ENCODE measurements at regions of chr16 and their contacts with region 1.

Region 1: GRCh38 chr16:85305996-85306792 is 193.9 kb upstream of the CIBAR2 start:
- DNase-seq: peak; percentile 54 to 89 (median 82)
- ATAC-seq: peak; percentile 87
- H3K4me3 ChIP-seq: no peak overlapping the region
- H3K4me3 Mint-ChIP-seq: peak overlapping the region; percentile 44
- H3K27ac ChIP-seq: peak overlapping the region in 1 of 2 experiments; percentile 31
- H3K27ac Mint-ChIP-seq: peak overlapping the region; percentile 95
- H3K4me1 ChIP-seq: peaks cover 80% of the 10 kb centered on the region
- H3K4me1 Mint-ChIP-seq: peaks cover 58% of the 10 kb centered on the region
- H3K27me3 ChIP-seq: peaks cover 0 to 6% of the 10 kb centered on the region in 2 experiments
- H3K27me3 Mint-ChIP-seq: no peaks in the 10 kb centered on the region
- CTCF ChIP-seq: no peak

Region 2: GRCh38 chr16:85330694-85331188 is 24.5 kb after region 1 on chr16:
- CTCF ChIA-PET with region 1: interaction called, 103 read pairs
- POLR2A ChIA-PET with region 1: interaction called, 5 read pairs
- intact Hi-C with region 1: loop called (anchors 1 to 2 kb)
- DNase-seq: peak in 4 of 9 experiments; percentile 23 to 67 (median 35)
- ATAC-seq: peak; percentile 59
- H3K4me3 ChIP-seq: no peak overlapping the region
- H3K4me3 Mint-ChIP-seq: no peak overlapping the region
- H3K27ac ChIP-seq: no peak overlapping the region
- H3K27ac Mint-ChIP-seq: no peak overlapping the region
- H3K4me1 ChIP-seq: peaks cover 22% of the 10 kb centered on the region
- H3K4me1 Mint-ChIP-seq: peaks cover 19% of the 10 kb centered on the region
- H3K27me3 ChIP-seq: no peaks in the 10 kb centered on the region
- H3K27me3 Mint-ChIP-seq: peaks cover 8% of the 10 kb centered on the region
- CTCF ChIP-seq: peak; percentile 29

Region 3: GRCh38 chr16:85354686-85355514 is 48.7 kb after region 1 on chr16:
- CTCF ChIA-PET with region 1: no interaction called
- POLR2A ChIA-PET with region 1: no interaction called
- intact Hi-C with region 1: no loop called
- DNase-seq: no peak
- ATAC-seq: no peak
- H3K4me3 ChIP-seq: no peak overlapping the region
- H3K4me3 Mint-ChIP-seq: no peak overlapping the region
- H3K27ac ChIP-seq: no peak overlapping the region
- H3K27ac Mint-ChIP-seq: no peak overlapping the region
- H3K4me1 ChIP-seq: no peaks in the 10 kb centered on the region
- H3K4me1 Mint-ChIP-seq: no peaks in the 10 kb centered on the region
- H3K27me3 ChIP-seq: no peaks in the 10 kb centered on the region
- H3K27me3 Mint-ChIP-seq: no peaks in the 10 kb centered on the region
- CTCF ChIP-seq: no peak

Region 4: GRCh38 chr16:85393674-85394483 is 87.7 kb after region 1 on chr16:
- CTCF ChIA-PET with region 1: interaction called, 3 read pairs
- POLR2A ChIA-PET with region 1: no interaction called
- intact Hi-C with region 1: loop called in 1 of 2 experiments (anchors 1 kb)
- DNase-seq: peak; percentile 45 to 83 (median 69)
- ATAC-seq: peak; percentile 84
- H3K4me3 ChIP-seq: no peak overlapping the region
- H3K4me3 Mint-ChIP-seq: no peak overlapping the region
- H3K27ac ChIP-seq: no peak overlapping the region
- H3K27ac Mint-ChIP-seq: no peak overlapping the region
- H3K4me1 ChIP-seq: no peaks in the 10 kb centered on the region
- H3K4me1 Mint-ChIP-seq: no peaks in the 10 kb centered on the region
- H3K27me3 ChIP-seq: no peaks in the 10 kb centered on the region
- H3K27me3 Mint-ChIP-seq: peaks cover 3% of the 10 kb centered on the region
- CTCF ChIP-seq: peak; percentile 72

Region 5: GRCh38 chr16:85420501-85421337 is 114.5 kb after region 1 on chr16:
- CTCF ChIA-PET with region 1: interaction called, 6 read pairs
- POLR2A ChIA-PET with region 1: no interaction called
- intact Hi-C with region 1: loop called (anchors 5 to 10 kb)
- DNase-seq: peak; percentile 60 to 87 (median 72)
- ATAC-seq: peak; percentile 91
- H3K4me3 ChIP-seq: no peak overlapping the region
- H3K4me3 Mint-ChIP-seq: no peak overlapping the region
- H3K27ac ChIP-seq: no peak overlapping the region
- H3K27ac Mint-ChIP-seq: no peak overlapping the region
- H3K4me1 ChIP-seq: peaks cover 7% of the 10 kb centered on the region
- H3K4me1 Mint-ChIP-seq: peaks cover 2% of the 10 kb centered on the region
- H3K27me3 ChIP-seq: no peaks in the 10 kb centered on the region
- H3K27me3 Mint-ChIP-seq: peaks cover 2% of the 10 kb centered on the region
- CTCF ChIP-seq: peak; percentile 100

Region 6: GRCh38 chr16:85428168-85428898 is 122.1 kb after region 1 on chr16:
- CTCF ChIA-PET with region 1: no interaction called
- POLR2A ChIA-PET with region 1: no interaction called
- intact Hi-C with region 1: loop called (anchors 5 to 10 kb)
- DNase-seq: peak in 8 of 9 experiments; percentile 29 to 66 (median 53)
- ATAC-seq: peak; percentile 83
- H3K4me3 ChIP-seq: no peak overlapping the region
- H3K4me3 Mint-ChIP-seq: no peak overlapping the region
- H3K27ac ChIP-seq: no peak overlapping the region
- H3K27ac Mint-ChIP-seq: no peak overlapping the region
- H3K4me1 ChIP-seq: no peaks in the 10 kb centered on the region
- H3K4me1 Mint-ChIP-seq: no peaks in the 10 kb centered on the region
- H3K27me3 ChIP-seq: no peaks in the 10 kb centered on the region
- H3K27me3 Mint-ChIP-seq: peaks cover 2% of the 10 kb centered on the region
- CTCF ChIP-seq: peak; percentile 40

Region 7: GRCh38 chr16:85699628-85700027 is 393.4 kb after region 1 on chr16:
- CTCF ChIA-PET with region 1: no interaction called
- POLR2A ChIA-PET with region 1: no interaction called
- intact Hi-C with region 1: no loop called
- DNase-seq: no peak
- ATAC-seq: no peak
- H3K4me3 ChIP-seq: no peak overlapping the region
- H3K4me3 Mint-ChIP-seq: no peak overlapping the region
- H3K27ac ChIP-seq: no peak overlapping the region
- H3K27ac Mint-ChIP-seq: no peak overlapping the region
- H3K4me1 ChIP-seq: no peaks in the 10 kb centered on the region
- H3K4me1 Mint-ChIP-seq: no peaks in the 10 kb centered on the region
- H3K27me3 ChIP-seq: peaks cover 0 to under 1% of the 10 kb centered on the region in 2 experiments
- H3K27me3 Mint-ChIP-seq: peaks cover 8% of the 10 kb centered on the region
- CTCF ChIP-seq: no peak

Region 8: DNA sequence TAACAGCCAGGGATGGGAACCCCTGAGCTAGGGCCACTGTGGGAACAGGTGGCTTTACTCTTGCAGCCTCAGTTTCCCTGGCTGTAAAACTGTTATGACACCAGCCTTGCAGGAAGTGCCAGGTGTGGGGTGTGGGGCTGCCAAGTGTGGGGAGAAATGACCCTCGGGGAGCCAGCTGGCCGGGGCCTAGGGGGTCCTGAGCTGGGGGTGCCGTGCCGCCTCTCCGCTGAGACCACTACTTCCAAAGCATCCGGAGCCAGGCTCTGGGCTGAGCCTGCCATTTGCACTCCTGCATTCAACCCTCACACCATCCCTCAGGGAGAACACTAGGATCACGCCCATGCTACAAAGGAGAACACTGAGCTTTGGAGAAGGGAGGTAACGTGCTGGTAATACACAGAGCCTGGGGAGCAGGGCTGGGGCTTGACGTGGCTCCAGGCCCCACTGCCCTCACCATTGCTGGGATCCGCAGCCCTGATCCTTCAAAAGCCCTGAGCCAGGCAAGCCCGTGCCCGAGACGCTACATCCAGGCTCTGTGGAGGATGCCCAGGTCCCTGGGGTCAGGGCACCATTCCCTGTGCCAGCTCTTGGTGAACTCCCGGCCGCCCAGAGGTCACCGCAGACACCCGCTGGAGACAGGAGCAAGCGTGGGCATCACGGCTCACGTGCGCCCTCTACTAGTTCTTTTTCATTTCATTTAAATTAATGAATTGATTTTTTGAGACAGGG is 411.4 kb after region 1 on chr16:
- CTCF ChIA-PET with region 1: no interaction called
- POLR2A ChIA-PET with region 1: no interaction called
- intact Hi-C with region 1: loop called in 1 of 2 experiments (anchors 5 kb)
- DNase-seq: peak; percentile 17 to 72 (median 54)
- ATAC-seq: peak; percentile 31
- H3K4me3 ChIP-seq: no peak overlapping the region
- H3K4me3 Mint-ChIP-seq: no peak overlapping the region
- H3K27ac ChIP-seq: no peak overlapping the region
- H3K27ac Mint-ChIP-seq: no peak overlapping the region
- H3K4me1 ChIP-seq: peaks cover 19% of the 10 kb centered on the region
- H3K4me1 Mint-ChIP-seq: peaks cover 14% of the 10 kb centered on the region
- H3K27me3 ChIP-seq: peaks cover 0 to 5% of the 10 kb centered on the region in 2 experiments
- H3K27me3 Mint-ChIP-seq: no peaks in the 10 kb centered on the region
- CTCF ChIP-seq: peak; percentile 88